ENCODE measurements at regions of chr18 and their contacts with region 1.

Region 1: GRCh38 chr18:30987450-30988241 is 54.9 kb downstream of the DSC3 start:
- DNase-seq: no peak
- H3K4me3 Mint-ChIP-seq: no peak overlapping the region
- H3K27ac Mint-ChIP-seq: no peak overlapping the region
- H3K4me1 Mint-ChIP-seq: no peaks in the 10 kb centered on the region
- H3K27me3 Mint-ChIP-seq: no peaks in the 10 kb centered on the region

Region 2: GRCh38 chr18:30920351-30920750 is 67.3 kb before region 1 on chr18:
- intact Hi-C with region 1: loop called (anchors 10 kb)
- DNase-seq: no peak
- H3K4me3 Mint-ChIP-seq: no peak overlapping the region
- H3K27ac Mint-ChIP-seq: no peak overlapping the region
- H3K4me1 Mint-ChIP-seq: no peaks in the 10 kb centered on the region
- H3K27me3 Mint-ChIP-seq: no peaks in the 10 kb centered on the region

Measured in activated CD4-positive, alpha-beta T cell treated with anti-CD3 and anti-CD28 coated beads, Interleukin-2, amount 10 ng/mL, durations not matched to agents 24 days and 14 days (primary cell).